ENCODE measurements at regions of chr10 and their contacts with region 1.

Region 1: GRCh38 chr10:91908337-91909116 is 759 bp downstream of the FGFBP3 start:
- DNase-seq: peak; percentile 72
- H3K4me3 ChIP-seq: peak overlapping the region; percentile 78
- H3K27ac ChIP-seq: peak overlapping the region; percentile 82
- H3K4me1 ChIP-seq: peaks cover 29% of the 10 kb centered on the region
- H3K27me3 ChIP-seq: no peaks in the 10 kb centered on the region
- CTCF ChIP-seq: peak; percentile 56

Region 2: DNA sequence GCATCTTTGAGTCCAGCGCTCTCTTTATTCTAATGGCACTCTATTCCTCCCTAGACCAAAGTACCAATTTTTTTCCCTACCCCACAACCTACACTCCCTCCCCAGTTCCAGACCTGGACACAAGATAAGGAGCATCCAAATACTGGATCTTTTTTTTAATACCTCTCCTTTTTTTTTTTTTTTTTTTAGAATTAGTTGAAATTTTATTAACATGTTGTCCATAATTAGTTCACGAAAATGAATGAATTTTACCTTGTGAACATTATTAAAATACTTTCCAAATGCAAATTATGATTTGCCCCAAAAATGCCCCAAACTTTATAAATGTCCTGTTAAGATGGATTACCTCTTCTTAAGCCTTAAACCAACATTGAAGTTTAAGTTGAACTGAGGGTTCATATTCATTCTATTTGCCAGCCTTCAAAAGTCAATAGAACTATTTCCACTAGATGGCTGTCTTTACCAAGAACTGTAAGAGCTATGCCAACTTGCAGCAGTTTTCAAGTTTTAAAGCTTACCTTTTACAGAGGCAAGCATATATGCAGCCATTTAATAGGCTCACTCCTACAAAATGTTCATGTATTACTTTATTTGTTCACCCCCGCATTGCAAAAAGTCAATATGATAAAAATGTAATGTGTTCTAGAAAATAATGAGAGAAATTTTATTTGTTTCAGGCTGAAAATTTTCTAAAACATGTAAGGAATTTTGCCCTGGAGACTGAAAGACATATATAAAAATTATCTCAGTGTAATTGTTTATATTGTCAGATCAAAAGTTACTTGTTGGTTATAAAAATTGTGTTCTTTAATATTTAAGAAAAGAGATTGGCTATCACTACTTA is 150.0 kb before region 1 on chr10:
- intact Hi-C with region 1: loop called (anchors 2 kb)
- DNase-seq: no peak
- H3K4me3 ChIP-seq: no peak overlapping the region
- H3K27ac ChIP-seq: no peak overlapping the region
- H3K4me1 ChIP-seq: no peaks in the 10 kb centered on the region
- H3K27me3 ChIP-seq: peaks cover 20% of the 10 kb centered on the region
- CTCF ChIP-seq: peak; percentile 70

Measured in left ventricle myocardium inferior (tissue), 1 donor.